ENCODE measurements at regions of chr12 and their contacts with region 1.

Region 1: DNA sequence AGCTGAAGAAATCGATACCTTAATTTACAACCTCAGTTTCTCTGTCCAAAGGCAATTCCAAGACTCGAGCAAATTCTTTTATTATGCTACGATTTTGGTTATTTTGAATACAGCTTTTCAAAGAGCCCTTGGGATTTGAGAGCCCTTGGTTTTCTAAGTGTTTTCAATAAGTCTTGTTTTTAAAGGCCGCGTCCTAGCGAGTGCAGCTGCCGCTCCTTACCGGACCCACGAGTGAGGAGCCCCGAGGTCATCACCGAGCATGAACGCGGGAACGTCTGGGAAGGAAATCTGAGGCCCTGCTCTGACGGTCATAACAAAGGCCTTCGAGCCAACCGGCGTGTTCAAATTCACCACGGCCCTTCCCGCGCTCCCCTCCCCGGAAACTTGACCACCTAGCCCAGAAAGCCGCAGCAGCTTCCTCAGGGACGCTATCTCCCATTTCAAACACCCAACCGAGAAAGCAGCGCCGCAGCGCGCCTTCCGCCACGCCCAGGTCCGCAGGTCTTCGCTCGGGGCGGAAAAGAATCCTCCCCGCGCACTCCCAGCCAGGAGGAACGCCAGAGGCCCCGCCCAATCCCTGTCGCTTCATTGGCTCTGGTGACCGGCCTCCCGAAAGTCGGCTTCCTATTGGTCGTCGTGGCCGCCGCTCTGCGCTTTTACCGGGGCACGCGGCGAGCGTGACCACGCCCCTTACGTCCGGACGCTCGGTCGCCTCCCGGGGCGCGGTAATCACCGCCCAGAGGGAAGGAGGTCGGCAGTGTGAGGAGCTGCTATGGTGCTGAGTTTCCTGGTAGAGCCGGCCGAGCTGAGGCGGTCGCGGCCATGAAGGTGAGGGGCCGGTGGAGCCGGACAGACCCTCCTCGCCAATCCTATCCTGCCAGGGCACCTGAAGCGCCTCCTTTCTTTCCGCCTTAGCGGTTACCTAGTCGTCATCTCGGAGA is at the start of gene RNF34:
- DNase-seq: peak; percentile 96 to 98 (median 97)
- H3K4me3 ChIP-seq: peak within 1 kb of the TSS; percentile 25 to 78
- H3K4me3 Mint-ChIP-seq: peak within 1 kb of the TSS; percentile 89 to 99 (median 94)
- H3K27ac ChIP-seq: peak within 1 kb of the TSS; percentile 87
- H3K27ac Mint-ChIP-seq: peak within 1 kb of the TSS; percentile 95 to 98 (median 96)
- H3K4me1 ChIP-seq: peaks cover 42% of the 10 kb centered on the region
- H3K4me1 Mint-ChIP-seq: peaks cover 21 to 47% (median 32%) of the 10 kb centered on the region in 4 donors
- H3K27me3 ChIP-seq: no peaks in the 10 kb centered on the region
- H3K27me3 Mint-ChIP-seq: no peaks in the 10 kb centered on the region
- total RNA-seq, gene RNF34: 88.6 to 95.3 TPM

Region 2: GRCh38 chr12:121296618-121297434 is 102.8 kb before region 1 on chr12 and contains the start of gene CAMKK2:
- CTCF ChIA-PET with region 1: no interaction called
- POLR2A ChIA-PET with region 1: interaction called, 17 read pairs
- intact Hi-C with region 1: no loop called
- DNase-seq: peak; percentile 87 to 94 (median 91)
- H3K4me3 ChIP-seq: peak within 1 kb of the TSS; percentile 53 to 82
- H3K4me3 Mint-ChIP-seq: peak within 1 kb of the TSS; percentile 87 to 94 (median 90)
- H3K27ac ChIP-seq: peak within 1 kb of the TSS; percentile 66
- H3K27ac Mint-ChIP-seq: peak within 1 kb of the TSS in 6 of 7 donors; percentile 78 to 93 (median 88)
- H3K4me1 ChIP-seq: peaks cover 26% of the 10 kb centered on the region
- H3K4me1 Mint-ChIP-seq: peaks cover 8 to 23% (median 18%) of the 10 kb centered on the region in 4 donors
- H3K27me3 ChIP-seq: no peaks in the 10 kb centered on the region
- H3K27me3 Mint-ChIP-seq: no peaks in the 10 kb centered on the region
- total RNA-seq, gene CAMKK2: 17.0 to 20.0 TPM

Region 3: DNA sequence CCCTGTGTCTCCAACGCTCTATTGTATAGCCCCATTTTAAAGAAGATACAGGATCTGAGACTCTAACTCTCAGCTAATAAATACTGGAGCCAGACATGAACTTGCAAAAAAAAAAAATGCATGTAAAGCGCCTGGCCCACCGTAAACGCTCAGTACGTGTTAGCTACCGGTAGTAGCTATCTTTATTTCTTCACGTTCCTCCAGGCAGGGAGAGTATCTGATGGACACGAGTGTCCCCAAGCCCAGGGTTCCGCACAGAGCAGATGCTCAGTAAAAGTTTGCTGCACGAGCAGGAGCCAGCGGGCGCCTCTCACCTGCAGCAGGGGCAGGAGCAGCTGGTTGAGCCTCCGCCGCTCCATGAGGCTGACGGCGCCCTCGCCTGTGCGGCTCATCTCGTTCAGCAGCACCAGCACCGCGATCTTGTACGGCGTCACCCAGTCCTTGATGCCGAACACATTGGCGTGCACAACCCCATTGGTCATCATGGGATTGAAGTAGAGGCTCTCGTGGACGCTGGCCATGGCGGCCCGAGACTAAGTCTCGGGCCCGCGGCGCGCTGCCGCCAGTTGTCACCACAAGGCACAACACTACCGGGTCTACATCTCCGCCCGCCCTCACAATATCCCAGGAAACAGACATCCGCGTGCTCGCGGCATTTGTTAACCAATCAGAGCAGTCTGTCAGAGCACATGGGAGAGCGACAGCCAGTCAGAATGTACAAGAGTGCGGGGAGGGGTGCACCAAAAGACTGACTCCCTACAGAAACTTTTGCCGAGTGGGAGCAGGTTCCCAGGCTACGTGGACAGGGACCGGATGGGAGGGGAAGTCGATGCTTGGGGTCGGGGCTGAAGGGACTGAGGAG is 47.6 kb before region 1 on chr12 and contains the start of gene ANAPC5:
- CTCF ChIA-PET with region 1: interaction called, 3 read pairs
- POLR2A ChIA-PET with region 1: interaction called, 65 read pairs
- intact Hi-C with region 1: loop called (anchors 1 kb)
- DNase-seq: peak; percentile 90 to 95 (median 92)
- H3K4me3 ChIP-seq: peak within 1 kb of the TSS; percentile 94 to 98
- H3K4me3 Mint-ChIP-seq: peak within 1 kb of the TSS; percentile 91 to 100 (median 98)
- H3K27ac ChIP-seq: peak within 1 kb of the TSS; percentile 65
- H3K27ac Mint-ChIP-seq: peak within 1 kb of the TSS; percentile 87 to 99 (median 98)
- H3K4me1 ChIP-seq: peaks cover 20% of the 10 kb centered on the region
- H3K4me1 Mint-ChIP-seq: peaks cover 11 to 51% (median 22%) of the 10 kb centered on the region in 4 donors
- H3K27me3 ChIP-seq: no peaks in the 10 kb centered on the region
- H3K27me3 Mint-ChIP-seq: peaks cover 0 to 2% of the 10 kb centered on the region in 2 donors
- total RNA-seq, gene ANAPC5: 143 to 144 TPM

Region 4: GRCh38 chr12:121364683-121365121 is 35.0 kb before region 1 on chr12:
- CTCF ChIA-PET with region 1: no interaction called
- POLR2A ChIA-PET with region 1: no interaction called
- intact Hi-C with region 1: no loop called
- DNase-seq: no peak
- H3K4me3 ChIP-seq: no peak overlapping the region
- H3K4me3 Mint-ChIP-seq: no peak overlapping the region
- H3K27ac ChIP-seq: no peak overlapping the region
- H3K27ac Mint-ChIP-seq: no peak overlapping the region
- H3K4me1 ChIP-seq: no peaks in the 10 kb centered on the region
- H3K4me1 Mint-ChIP-seq: no peaks in the 10 kb centered on the region
- H3K27me3 ChIP-seq: no peaks in the 10 kb centered on the region
- H3K27me3 Mint-ChIP-seq: peaks cover 13 to 19% of the 10 kb centered on the region in 2 donors

Region 5: DNA sequence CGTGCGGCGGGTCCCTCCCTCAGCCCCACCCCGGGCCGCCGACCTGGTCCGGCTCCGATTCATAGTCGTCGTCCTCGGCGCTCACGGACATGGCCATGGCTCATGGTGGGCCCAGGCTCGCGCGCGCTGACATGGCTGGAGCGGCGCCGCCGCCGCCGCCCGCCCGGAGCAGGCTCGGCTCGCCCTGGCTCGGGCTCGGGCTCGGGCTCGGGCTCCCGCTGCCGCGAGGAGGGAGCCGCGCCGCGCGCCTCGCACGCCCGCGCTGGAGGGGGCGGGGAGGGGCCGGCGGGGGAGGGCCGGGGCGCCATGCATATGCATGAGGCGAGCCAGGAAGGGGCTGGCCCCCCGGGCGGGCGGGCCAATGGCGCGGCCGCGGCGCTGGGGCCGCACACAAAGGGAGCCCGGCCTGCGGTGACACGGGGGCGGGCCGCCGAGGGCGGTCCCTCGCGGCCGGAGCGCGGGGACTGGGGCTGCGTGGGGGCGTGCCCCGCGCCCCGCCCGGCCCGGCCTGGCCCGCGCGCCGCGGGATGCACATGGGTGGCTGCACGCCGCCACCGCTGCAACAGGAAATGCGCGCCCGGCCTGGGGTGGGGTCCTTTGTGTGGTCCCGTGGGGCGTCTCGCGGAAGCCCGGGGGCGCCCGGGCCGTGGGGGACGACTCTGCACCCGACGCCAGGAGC is 67.6 kb after region 1 on chr12:
- CTCF ChIA-PET with region 1: no interaction called
- POLR2A ChIA-PET with region 1: interaction called, 4 read pairs
- intact Hi-C with region 1: loop called (anchors 2 kb)
- DNase-seq: peak; percentile 85 to 91 (median 87)
- H3K4me3 ChIP-seq: peak overlapping the region in 1 of 2 donors; percentile 35
- H3K4me3 Mint-ChIP-seq: peak overlapping the region in 5 of 8 donors; percentile 21 to 74 (median 47)
- H3K27ac ChIP-seq: peak overlapping the region; percentile 42
- H3K27ac Mint-ChIP-seq: no peak overlapping the region
- H3K4me1 ChIP-seq: peaks cover 25% of the 10 kb centered on the region
- H3K4me1 Mint-ChIP-seq: peaks cover 17 to 30% (median 22%) of the 10 kb centered on the region in 4 donors
- H3K27me3 ChIP-seq: no peaks in the 10 kb centered on the region
- H3K27me3 Mint-ChIP-seq: no peaks in the 10 kb centered on the region

Measured in CD4-positive, alpha-beta memory T cell (primary cell).